Caco-2 (cell line): ENCODE measurements at regions of chr6 and their contacts with region 1.

Region 1: DNA sequence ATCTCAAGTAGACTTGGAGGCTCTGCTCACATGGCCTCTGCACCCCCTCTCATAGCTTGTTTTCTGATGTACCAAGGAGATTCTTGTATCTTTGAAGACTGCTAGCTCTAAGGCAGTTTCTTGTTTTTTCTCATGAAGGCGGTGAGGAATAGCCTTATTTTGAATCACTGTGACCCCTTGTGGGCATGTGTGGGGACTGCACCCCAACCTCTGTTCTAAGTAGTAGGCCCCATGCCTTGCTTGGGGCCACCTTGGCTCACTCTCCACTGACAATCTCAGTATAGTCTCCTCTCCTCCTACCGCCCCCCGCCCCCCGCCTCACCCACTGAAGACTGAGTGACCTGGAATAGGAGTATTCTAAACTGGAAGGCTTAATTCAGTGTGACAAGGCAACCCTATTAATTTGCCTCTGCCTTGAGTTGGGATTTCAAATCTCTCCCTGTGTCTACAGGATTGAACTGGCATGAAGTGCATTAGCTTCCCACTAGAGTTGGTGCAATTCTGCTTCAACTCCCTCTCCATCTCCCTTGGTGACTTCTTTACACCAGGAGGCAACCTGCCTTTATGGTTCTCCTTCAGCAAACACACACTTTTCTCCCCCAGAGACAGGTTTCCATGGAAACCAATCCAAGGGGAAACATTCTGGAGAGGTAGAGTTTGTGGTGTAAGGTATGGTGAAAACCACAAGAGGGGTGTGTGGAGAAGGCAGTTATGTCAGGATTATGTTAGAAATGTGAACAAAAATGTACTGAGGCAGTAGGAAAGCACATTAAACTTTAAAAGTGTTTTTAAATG is 75.5 kb upstream of the ECI2 start:
- DNase-seq: peak; percentile 51 to 61
- H3K4me3 ChIP-seq: no peak overlapping the region
- H3K4me3 Mint-ChIP-seq: no peak overlapping the region
- H3K27ac Mint-ChIP-seq: no peak overlapping the region
- H3K4me1 ChIP-seq: no peaks in the 10 kb centered on the region
- H3K4me1 Mint-ChIP-seq: no peaks in the 10 kb centered on the region
- H3K27me3 ChIP-seq: no peaks in the 10 kb centered on the region
- H3K27me3 Mint-ChIP-seq: peaks cover 2% of the 10 kb centered on the region
- CTCF ChIP-seq: peak; percentile 55 to 68

Region 2: GRCh38 chr6:3612341-3613041 is 598.3 kb before region 1 on chr6:
- CTCF ChIA-PET with region 1: no interaction called
- POLR2A ChIA-PET with region 1: no interaction called
- intact Hi-C with region 1: no loop called
- DNase-seq: peak in 1 of 2 experiments; percentile 30
- H3K4me3 ChIP-seq: no peak overlapping the region
- H3K4me3 Mint-ChIP-seq: no peak overlapping the region
- H3K27ac Mint-ChIP-seq: no peak overlapping the region
- H3K4me1 ChIP-seq: no peaks in the 10 kb centered on the region
- H3K4me1 Mint-ChIP-seq: peaks cover 6% of the 10 kb centered on the region
- H3K27me3 ChIP-seq: no peaks in the 10 kb centered on the region
- H3K27me3 Mint-ChIP-seq: no peaks in the 10 kb centered on the region
- CTCF ChIP-seq: no peak

Region 3: GRCh38 chr6:4055420-4056041 is 155.3 kb before region 1 on chr6:
- CTCF ChIA-PET with region 1: no interaction called
- POLR2A ChIA-PET with region 1: no interaction called
- intact Hi-C with region 1: loop called (anchors 1 kb)
- DNase-seq: peak in 1 of 2 experiments; percentile 50
- H3K4me3 ChIP-seq: no peak overlapping the region
- H3K4me3 Mint-ChIP-seq: no peak overlapping the region
- H3K27ac Mint-ChIP-seq: no peak overlapping the region
- H3K4me1 ChIP-seq: no peaks in the 10 kb centered on the region
- H3K4me1 Mint-ChIP-seq: no peaks in the 10 kb centered on the region
- H3K27me3 ChIP-seq: no peaks in the 10 kb centered on the region
- H3K27me3 Mint-ChIP-seq: no peaks in the 10 kb centered on the region
- CTCF ChIP-seq: peak in 1 of 2 experiments; percentile 61

Region 4: DNA sequence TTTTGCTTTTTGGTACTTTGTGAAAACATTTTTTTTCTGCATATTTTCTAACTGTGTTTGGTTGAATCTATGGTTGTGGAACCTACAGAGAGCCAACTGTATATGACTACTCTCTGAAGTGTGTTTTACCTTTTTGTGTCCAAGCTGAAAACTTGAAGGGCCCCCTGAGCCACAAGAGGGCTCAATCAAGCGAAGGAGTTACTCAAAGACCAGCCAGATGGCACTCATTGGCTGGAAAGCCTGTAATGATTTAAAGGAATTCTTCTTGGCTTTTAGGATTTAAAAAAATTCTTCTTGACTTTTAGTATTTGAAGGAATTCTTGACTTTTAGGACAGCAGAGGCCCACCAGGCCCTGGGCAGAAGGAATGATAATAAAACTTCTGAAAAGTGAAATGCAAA is 48.5 kb before region 1 on chr6:
- CTCF ChIA-PET with region 1: no interaction called
- POLR2A ChIA-PET with region 1: no interaction called
- intact Hi-C with region 1: loop called (anchors 1 kb)
- DNase-seq: no peak
- H3K4me3 ChIP-seq: no peak overlapping the region
- H3K4me3 Mint-ChIP-seq: no peak overlapping the region
- H3K27ac Mint-ChIP-seq: no peak overlapping the region
- H3K4me1 ChIP-seq: no peaks in the 10 kb centered on the region
- H3K4me1 Mint-ChIP-seq: no peaks in the 10 kb centered on the region
- H3K27me3 ChIP-seq: no peaks in the 10 kb centered on the region
- H3K27me3 Mint-ChIP-seq: peaks cover 5% of the 10 kb centered on the region
- CTCF ChIP-seq: no peak

Region 5: GRCh38 chr6:4879724-4880371 is 669.0 kb after region 1 on chr6:
- CTCF ChIA-PET with region 1: no interaction called
- POLR2A ChIA-PET with region 1: no interaction called
- intact Hi-C with region 1: no loop called
- DNase-seq: no peak
- H3K4me3 ChIP-seq: no peak overlapping the region
- H3K4me3 Mint-ChIP-seq: no peak overlapping the region
- H3K27ac Mint-ChIP-seq: no peak overlapping the region
- H3K4me1 ChIP-seq: no peaks in the 10 kb centered on the region
- H3K4me1 Mint-ChIP-seq: no peaks in the 10 kb centered on the region
- H3K27me3 ChIP-seq: no peaks in the 10 kb centered on the region
- H3K27me3 Mint-ChIP-seq: no peaks in the 10 kb centered on the region
- CTCF ChIP-seq: no peak